Activated naive CD8-positive, alpha-beta T cell treated with anti-CD3 and anti-CD28 coated beads, Interleukin-2, amount 10 ng/mL, durations not matched to agents 7 days and 5 days (primary cell): ENCODE measurements at regions of chr20 and their contacts with region 1.

Region 1: DNA sequence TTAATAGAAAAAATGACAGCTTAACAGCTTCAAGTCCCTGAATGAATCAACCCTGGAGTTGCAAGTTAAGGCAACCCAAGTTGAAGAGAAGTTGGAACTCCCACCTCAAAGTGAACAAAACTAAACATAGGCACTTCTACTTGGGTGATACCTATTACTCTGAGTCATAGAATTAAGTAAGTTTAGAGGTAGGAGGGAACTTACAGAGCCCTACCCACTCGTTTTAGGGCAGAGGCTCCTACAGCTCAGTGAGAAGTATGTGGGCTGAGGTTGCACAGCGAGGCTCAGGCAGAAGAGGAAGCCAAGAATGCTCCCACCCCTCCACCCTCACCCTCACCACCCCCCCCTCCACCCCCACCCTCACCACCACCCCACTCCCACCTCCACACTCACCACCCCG is 42.2 kb downstream of the NFATC2 start:
- DNase-seq: no peak
- ATAC-seq: peak; percentile 94
- H3K4me3 Mint-ChIP-seq: peak overlapping the region; percentile 23
- H3K27ac Mint-ChIP-seq: peak overlapping the region; percentile 77
- H3K4me1 Mint-ChIP-seq: peaks cover 82% of the 10 kb centered on the region
- H3K27me3 Mint-ChIP-seq: no peaks in the 10 kb centered on the region

Region 2: GRCh38 chr20:51400051-51400926 is 100.0 kb before region 1 on chr20:
- POLR2A ChIA-PET with region 1: interaction called, 10 read pairs
- DNase-seq: peak; percentile 72
- ATAC-seq: peak; percentile 82
- H3K4me3 Mint-ChIP-seq: peak overlapping the region; percentile 75
- H3K27ac Mint-ChIP-seq: peak overlapping the region; percentile 96
- H3K4me1 Mint-ChIP-seq: peaks cover 69% of the 10 kb centered on the region
- H3K27me3 Mint-ChIP-seq: no peaks in the 10 kb centered on the region

Region 3: GRCh38 chr20:51480507-51481270 is 19.6 kb before region 1 on chr20:
- POLR2A ChIA-PET with region 1: interaction called, 13 read pairs
- DNase-seq: no peak
- ATAC-seq: peak; percentile 45
- H3K4me3 Mint-ChIP-seq: peak overlapping the region; percentile 74
- H3K27ac Mint-ChIP-seq: peak overlapping the region; percentile 90
- H3K4me1 Mint-ChIP-seq: peaks cover 84% of the 10 kb centered on the region
- H3K27me3 Mint-ChIP-seq: no peaks in the 10 kb centered on the region